GM12878 (cell line): ENCODE measurements at regions of chr11 and their contacts with region 1.

Region 1: DNA sequence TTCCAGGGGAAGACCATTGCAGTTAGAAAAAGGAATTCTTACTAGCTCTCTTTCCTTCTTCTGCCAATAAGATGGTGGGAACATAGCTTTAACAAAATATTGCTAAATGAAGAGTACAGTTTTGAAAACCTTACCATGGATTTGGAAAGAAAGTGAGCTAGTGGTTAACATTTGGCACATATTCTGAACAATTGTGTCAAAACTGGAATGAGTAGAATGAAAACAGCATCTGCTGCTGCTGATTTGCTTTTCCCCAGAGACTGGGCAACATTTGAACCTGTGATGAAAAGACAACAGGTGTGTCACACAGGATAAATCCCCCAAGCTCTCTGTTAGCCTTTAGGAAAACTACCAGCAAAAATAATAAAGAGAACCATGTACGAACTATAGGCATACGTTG is 761.4 kb downstream of the KCNA4 start:
- DNase-seq: no peak
- ATAC-seq: peak; percentile 4; the same call in 1 of the 3 replicates
- H3K4me3 ChIP-seq: no peak overlapping the region
- H3K27ac ChIP-seq: no peak overlapping the region
- H3K4me1 ChIP-seq: no peaks in the 10 kb centered on the region
- H3K27me3 ChIP-seq: no peaks in the 10 kb centered on the region
- CTCF ChIP-seq: no peak
- EP300 ChIP-seq: no peak
- POLR2A ChIP-seq: no peak
- RAD21 ChIP-seq: no peak

Region 2: DNA sequence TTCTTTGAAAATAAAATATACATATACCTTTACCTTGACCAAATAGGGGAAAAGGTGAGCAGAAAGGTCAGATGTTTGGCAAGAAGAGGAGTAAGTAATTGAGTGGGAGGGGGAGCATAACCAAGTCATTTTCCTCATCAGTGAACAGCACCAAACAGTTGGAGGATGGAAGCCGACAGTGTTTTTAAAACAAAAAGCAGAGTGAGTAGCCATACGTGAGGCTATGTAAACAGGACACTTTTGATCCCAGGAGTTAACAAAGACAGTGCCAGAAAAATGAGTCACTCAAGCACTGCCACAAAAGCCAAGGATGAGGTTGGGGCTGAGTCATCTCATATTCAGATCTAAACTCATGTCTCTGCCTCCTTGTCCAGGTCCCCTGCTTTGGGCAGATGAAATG is 26.7 kb after region 1 on chr11:
- CTCF ChIA-PET with region 1: interaction called, 3 read pairs
- POLR2A ChIA-PET with region 1: interaction called, 3 read pairs
- RAD21 ChIA-PET with region 1: interaction called, 11 read pairs
- SMC1A ChIA-PET with region 1: interaction called, 15 read pairs
- in situ Hi-C with region 1: no loop called
- intact Hi-C with region 1: no loop called
- DNase-seq: no peak
- ATAC-seq: peak; percentile 59
- H3K4me3 ChIP-seq: no peak overlapping the region
- H3K27ac ChIP-seq: no peak overlapping the region
- H3K4me1 ChIP-seq: no peaks in the 10 kb centered on the region
- H3K27me3 ChIP-seq: no peaks in the 10 kb centered on the region
- CTCF ChIP-seq: no peak
- EP300 ChIP-seq: no peak
- POLR2A ChIP-seq: no peak
- RAD21 ChIP-seq: no peak

Region 3: DNA sequence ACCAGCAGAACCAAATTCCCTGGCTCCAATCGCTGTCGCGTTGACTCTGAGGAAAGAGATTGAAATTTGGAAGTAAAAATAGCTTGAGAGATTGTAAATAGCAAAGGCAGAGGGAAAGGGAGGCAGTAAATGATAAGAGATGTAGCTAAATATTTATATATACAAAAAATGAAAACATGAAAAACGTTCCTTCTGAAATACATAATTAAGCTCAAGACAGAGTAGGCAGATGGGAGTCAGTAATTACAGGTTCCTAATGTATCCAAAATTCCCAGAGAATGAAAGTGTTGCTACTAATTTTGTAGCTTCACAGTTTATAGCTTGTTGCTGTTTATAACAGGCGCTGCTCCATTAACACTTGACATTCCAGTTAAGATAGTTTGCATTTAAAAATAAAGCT is 112.7 kb after region 1 on chr11:
- CTCF ChIA-PET with region 1: no interaction called
- POLR2A ChIA-PET with region 1: no interaction called
- RAD21 ChIA-PET with region 1: no interaction called
- SMC1A ChIA-PET with region 1: no interaction called
- in situ Hi-C with region 1: no loop called
- intact Hi-C with region 1: no loop called
- DNase-seq: no peak
- ATAC-seq: no peak
- H3K4me3 ChIP-seq: no peak overlapping the region
- H3K27ac ChIP-seq: no peak overlapping the region
- H3K4me1 ChIP-seq: no peaks in the 10 kb centered on the region
- H3K27me3 ChIP-seq: no peaks in the 10 kb centered on the region
- CTCF ChIP-seq: no peak
- EP300 ChIP-seq: no peak
- POLR2A ChIP-seq: no peak
- RAD21 ChIP-seq: no peak